ENCODE measurements at regions of chr16 and their contacts with region 1.

Region 1: GRCh38 chr16:73220836-73221235 is 172.9 kb upstream of the ZFHX3 start:
- DNase-seq: no peak

Region 2: GRCh38 chr16:73202161-73202729 is 18.6 kb before region 1 on chr16:
- intact Hi-C with region 1: no loop called
- DNase-seq: no peak

Region 3: DNA sequence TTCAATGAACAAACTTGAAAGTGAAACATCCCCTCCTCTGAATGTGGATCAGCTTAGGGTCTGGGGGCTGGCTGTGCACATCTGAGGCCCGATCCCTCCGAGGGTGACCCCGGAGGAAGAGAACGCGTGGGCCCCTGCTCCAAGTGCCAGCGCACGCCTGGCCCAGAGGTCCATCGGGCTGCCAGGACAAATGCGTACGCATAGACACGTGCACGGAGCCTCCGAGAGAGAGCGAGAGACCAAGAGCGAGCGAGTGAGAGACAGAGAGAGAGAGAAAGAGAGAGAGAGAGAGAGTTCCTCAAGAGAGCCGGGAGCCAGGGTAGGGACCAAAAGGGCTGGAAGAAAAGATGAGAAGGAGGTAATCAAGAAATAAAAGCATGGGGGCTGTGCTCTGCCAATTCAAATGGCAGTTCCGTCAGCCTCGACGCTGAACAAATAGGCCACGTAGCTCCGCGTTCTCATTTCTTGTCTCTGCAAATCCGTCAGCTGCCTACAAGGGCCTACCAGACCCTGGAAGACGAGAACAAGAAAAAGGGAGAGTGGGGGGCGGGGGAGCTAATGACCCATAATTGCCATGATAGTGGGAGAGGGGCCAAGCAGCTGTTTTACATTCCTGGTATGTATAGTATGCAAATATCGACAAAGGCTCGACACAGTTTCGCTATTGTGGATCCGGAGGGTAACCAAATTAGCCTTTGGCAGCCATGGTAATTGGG is 262.4 kb after region 1 on chr16:
- intact Hi-C with region 1: no loop called
- DNase-seq: no peak

Region 4: DNA sequence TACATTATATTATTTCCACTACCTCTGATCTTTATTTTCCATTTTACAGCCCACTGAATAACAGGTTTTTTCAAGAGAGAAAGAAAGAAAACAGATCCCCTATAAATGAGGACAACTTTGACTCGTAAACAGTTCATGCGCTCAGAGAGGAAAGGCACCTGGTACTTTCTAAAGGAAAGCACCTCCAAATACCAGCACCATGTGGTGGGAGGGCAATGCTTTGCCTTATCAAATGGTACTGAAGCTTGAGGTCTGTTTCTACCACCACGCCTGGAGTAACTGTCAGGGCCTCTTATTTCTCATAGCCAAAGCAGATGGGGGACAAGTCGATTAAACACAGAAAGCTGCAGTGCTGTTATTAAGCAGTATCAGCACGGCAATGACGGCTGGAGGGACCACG is 337.4 kb after region 1 on chr16:
- intact Hi-C with region 1: loop called in 1 of 2 experiments (anchors 5 kb)
- DNase-seq: no peak